ENCODE measurements at regions of chr3 and their contacts with region 1.

Region 1: DNA sequence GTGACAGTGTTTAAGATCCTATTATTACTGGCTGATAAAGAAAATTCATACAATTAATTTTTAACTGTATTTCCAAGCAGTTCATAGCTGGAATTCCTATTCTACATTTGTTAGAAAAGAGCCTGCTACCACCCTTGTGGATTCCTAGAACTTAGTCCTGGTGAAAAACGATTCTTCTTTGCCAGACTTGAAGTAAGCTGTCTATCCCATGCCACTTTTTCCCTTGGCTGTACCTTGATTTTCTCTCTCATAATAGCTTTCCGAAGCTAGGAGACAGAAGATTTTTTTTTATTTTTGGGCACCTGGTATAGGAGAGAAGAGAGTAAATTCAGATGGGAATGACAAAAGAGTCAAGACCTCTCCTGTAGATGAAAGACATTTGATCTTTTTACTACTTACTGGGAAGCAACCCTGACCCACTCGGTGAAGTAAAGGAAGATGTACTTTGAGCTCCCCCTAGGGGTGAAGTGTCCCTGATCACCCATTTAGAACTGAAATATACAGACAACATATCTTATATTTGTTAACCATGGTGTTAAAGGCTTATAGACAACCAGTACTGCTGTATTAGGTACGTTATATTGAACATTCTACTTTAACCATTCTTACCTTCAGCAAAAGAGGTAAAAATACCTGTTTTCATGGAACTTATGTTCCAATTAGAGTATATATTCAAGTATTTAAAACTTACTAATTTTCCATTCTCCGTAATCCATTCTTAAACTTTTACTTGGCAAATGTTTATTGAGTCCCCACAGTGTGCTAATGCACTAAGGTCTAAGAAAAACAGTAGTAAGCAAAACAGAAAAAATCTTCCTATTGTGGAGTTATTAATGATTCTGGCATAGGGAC is 36.2 kb upstream of the C3orf38 start:
- DNase-seq: peak in 13 of 14 experiments; percentile 4 to 84 (median 47)
- ATAC-seq: peak; percentile 96
- H3K4me3 ChIP-seq: no peak overlapping the region
- H3K4me3 Mint-ChIP-seq: no peak overlapping the region
- H3K27ac ChIP-seq: no peak overlapping the region
- H3K27ac Mint-ChIP-seq: peak overlapping the region; percentile 14
- H3K4me1 ChIP-seq: no peaks in the 10 kb centered on the region
- H3K4me1 Mint-ChIP-seq: peaks cover 30% of the 10 kb centered on the region
- H3K27me3 ChIP-seq: no peaks in the 10 kb centered on the region
- H3K27me3 Mint-ChIP-seq: no peaks in the 10 kb centered on the region
- CTCF ChIP-seq: peak; percentile 92

Region 2: GRCh38 chr3:86948840-86949239 is 1164.7 kb before region 1 on chr3:
- CTCF ChIA-PET with region 1: no interaction called
- POLR2A ChIA-PET with region 1: no interaction called
- intact Hi-C with region 1: no loop called
- DNase-seq: no peak
- ATAC-seq: no peak
- H3K4me3 ChIP-seq: no peak overlapping the region
- H3K4me3 Mint-ChIP-seq: no peak overlapping the region
- H3K27ac ChIP-seq: no peak overlapping the region
- H3K27ac Mint-ChIP-seq: no peak overlapping the region
- H3K4me1 ChIP-seq: no peaks in the 10 kb centered on the region
- H3K4me1 Mint-ChIP-seq: no peaks in the 10 kb centered on the region
- H3K27me3 ChIP-seq: no peaks in the 10 kb centered on the region
- H3K27me3 Mint-ChIP-seq: no peaks in the 10 kb centered on the region
- CTCF ChIP-seq: no peak

Region 3: DNA sequence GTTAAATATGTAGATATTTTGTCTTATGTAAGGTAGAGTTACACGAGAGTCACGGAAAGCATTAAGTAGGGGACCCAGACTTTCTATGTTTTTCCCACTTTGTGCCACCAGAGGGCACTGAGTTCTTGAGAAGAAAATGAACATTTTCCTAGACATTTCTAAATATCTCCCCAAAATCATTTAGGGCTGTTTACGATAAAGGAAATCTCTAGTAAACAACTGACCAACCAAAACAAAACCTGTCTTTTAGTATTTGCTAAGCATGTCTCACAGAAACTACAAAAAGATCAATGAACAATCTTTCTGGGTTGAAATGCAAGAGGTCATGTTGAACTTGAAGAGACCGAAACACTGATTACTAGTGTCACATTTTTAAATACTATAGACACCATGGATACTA is 853.3 kb before region 1 on chr3:
- CTCF ChIA-PET with region 1: interaction called, 9 read pairs
- POLR2A ChIA-PET with region 1: no interaction called
- intact Hi-C with region 1: loop called in 1 of 2 experiments (anchors 1 kb)
- DNase-seq: peak in 10 of 14 experiments; percentile 3 to 62 (median 26)
- ATAC-seq: peak; percentile 68
- H3K4me3 ChIP-seq: no peak overlapping the region
- H3K4me3 Mint-ChIP-seq: no peak overlapping the region
- H3K27ac ChIP-seq: no peak overlapping the region
- H3K27ac Mint-ChIP-seq: no peak overlapping the region
- H3K4me1 ChIP-seq: no peaks in the 10 kb centered on the region
- H3K4me1 Mint-ChIP-seq: peaks cover 5% of the 10 kb centered on the region
- H3K27me3 ChIP-seq: no peaks in the 10 kb centered on the region
- H3K27me3 Mint-ChIP-seq: no peaks in the 10 kb centered on the region
- CTCF ChIP-seq: peak; percentile 78

Region 4: GRCh38 chr3:87350364-87351199 is 763.0 kb before region 1 on chr3:
- CTCF ChIA-PET with region 1: interaction called, 10 read pairs
- POLR2A ChIA-PET with region 1: no interaction called
- intact Hi-C with region 1: loop called (anchors 1 to 2 kb)
- DNase-seq: peak in 5 of 14 experiments; percentile 2 to 70 (median 56)
- ATAC-seq: peak; percentile 89
- H3K4me3 ChIP-seq: no peak overlapping the region
- H3K4me3 Mint-ChIP-seq: no peak overlapping the region
- H3K27ac ChIP-seq: no peak overlapping the region
- H3K27ac Mint-ChIP-seq: no peak overlapping the region
- H3K4me1 ChIP-seq: no peaks in the 10 kb centered on the region
- H3K4me1 Mint-ChIP-seq: no peaks in the 10 kb centered on the region
- H3K27me3 ChIP-seq: no peaks in the 10 kb centered on the region
- H3K27me3 Mint-ChIP-seq: no peaks in the 10 kb centered on the region
- CTCF ChIP-seq: peak; percentile 94

Region 5: DNA sequence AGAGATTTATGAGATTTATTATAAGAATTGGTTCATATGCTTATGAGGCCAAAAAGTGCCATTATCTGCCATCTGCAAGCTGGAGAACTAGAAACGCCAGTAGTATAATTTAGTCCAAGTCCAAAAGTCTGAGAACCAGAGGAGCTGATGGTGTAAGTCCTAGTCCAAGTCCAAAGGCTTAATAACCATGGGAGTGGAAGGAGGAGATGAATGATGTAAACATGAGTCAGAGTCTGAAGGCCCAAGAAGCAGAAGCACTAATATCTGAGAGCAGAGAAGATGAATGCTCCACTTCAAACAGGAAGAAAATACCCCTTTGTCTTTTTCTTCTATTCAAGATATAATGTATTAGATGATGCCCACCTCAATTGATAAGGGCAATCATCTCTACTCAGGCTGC is 240.4 kb before region 1 on chr3:
- CTCF ChIA-PET with region 1: no interaction called
- POLR2A ChIA-PET with region 1: no interaction called
- intact Hi-C with region 1: loop called in 1 of 2 experiments (anchors 10 kb)
- DNase-seq: no peak
- ATAC-seq: no peak
- H3K4me3 ChIP-seq: no peak overlapping the region
- H3K4me3 Mint-ChIP-seq: no peak overlapping the region
- H3K27ac ChIP-seq: no peak overlapping the region
- H3K27ac Mint-ChIP-seq: no peak overlapping the region
- H3K4me1 ChIP-seq: no peaks in the 10 kb centered on the region
- H3K4me1 Mint-ChIP-seq: no peaks in the 10 kb centered on the region
- H3K27me3 ChIP-seq: no peaks in the 10 kb centered on the region
- H3K27me3 Mint-ChIP-seq: no peaks in the 10 kb centered on the region
- CTCF ChIP-seq: no peak

Region 6: DNA sequence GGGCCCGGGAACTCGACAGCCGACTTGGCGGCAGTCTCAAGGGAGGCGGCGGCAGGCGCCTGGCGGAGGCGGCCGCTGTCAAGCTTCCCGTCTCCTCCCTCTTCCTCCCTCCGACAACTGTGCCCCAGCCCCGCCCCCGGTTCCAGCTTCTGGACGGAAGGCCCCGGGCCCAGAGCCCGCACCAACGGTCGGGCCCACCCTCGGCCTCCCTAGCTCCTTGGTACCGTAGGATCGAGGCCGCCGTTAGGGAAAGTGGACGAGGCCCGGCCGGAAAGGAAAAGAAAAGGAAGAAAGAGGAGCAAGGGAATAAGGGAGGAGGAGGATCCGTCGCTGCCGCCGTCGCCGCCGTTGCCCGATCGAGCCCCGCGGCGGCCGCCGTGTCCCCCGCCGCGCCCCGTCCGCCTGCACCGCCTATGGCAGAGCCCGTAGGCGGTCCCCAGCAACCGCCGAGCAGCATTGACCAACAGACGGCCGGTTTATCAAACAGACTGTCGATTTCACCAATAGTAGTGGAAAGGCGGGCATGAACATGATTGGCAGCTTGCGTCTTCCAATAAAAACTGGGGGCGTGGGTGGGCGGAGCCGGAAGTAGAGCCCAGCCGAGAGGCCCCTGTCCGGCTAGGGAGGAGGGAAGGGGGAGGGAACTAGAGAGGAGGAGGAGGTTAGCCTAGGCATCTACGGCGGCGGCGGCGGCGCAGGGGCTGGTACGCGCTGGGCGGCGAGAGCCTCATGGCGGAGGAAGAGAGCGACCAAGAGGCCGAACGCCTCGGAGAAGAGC is 54.8 kb before region 1 on chr3 and contains the starts of genes CGGBP1 and ZNF654:
- CTCF ChIA-PET with region 1: interaction called, 3 read pairs
- POLR2A ChIA-PET with region 1: interaction called, 7 read pairs
- intact Hi-C with region 1: loop called in 1 of 2 experiments (anchors 5 kb)
- DNase-seq: peak; percentile 96 to 99 (median 99)
- ATAC-seq: peak; percentile 89
- H3K4me3 ChIP-seq: peak within 1 kb of the TSS; percentile 98
- H3K4me3 Mint-ChIP-seq: peak within 1 kb of the TSS; percentile 100
- H3K27ac ChIP-seq: peak within 1 kb of the TSS; percentile 92
- H3K27ac Mint-ChIP-seq: peak within 1 kb of the TSS; percentile 93
- H3K4me1 ChIP-seq: peaks cover 5% of the 10 kb centered on the region
- H3K4me1 Mint-ChIP-seq: peaks cover 72% of the 10 kb centered on the region
- H3K27me3 ChIP-seq: no peaks in the 10 kb centered on the region
- H3K27me3 Mint-ChIP-seq: no peaks in the 10 kb centered on the region
- CTCF ChIP-seq: no peak
- total RNA-seq, gene CGGBP1: 88.7 to 89.7 TPM
- total RNA-seq, gene ZNF654: 6.5 to 7.6 TPM

Region 7: GRCh38 chr3:88189361-88189810 is 75.8 kb after region 1 on chr3:
- CTCF ChIA-PET with region 1: no interaction called
- POLR2A ChIA-PET with region 1: no interaction called
- intact Hi-C with region 1: no loop called
- DNase-seq: no peak
- ATAC-seq: no peak
- H3K4me3 ChIP-seq: no peak overlapping the region
- H3K4me3 Mint-ChIP-seq: no peak overlapping the region
- H3K27ac ChIP-seq: no peak overlapping the region
- H3K27ac Mint-ChIP-seq: no peak overlapping the region
- H3K4me1 ChIP-seq: no peaks in the 10 kb centered on the region
- H3K4me1 Mint-ChIP-seq: no peaks in the 10 kb centered on the region
- H3K27me3 ChIP-seq: no peaks in the 10 kb centered on the region
- H3K27me3 Mint-ChIP-seq: no peaks in the 10 kb centered on the region
- CTCF ChIP-seq: no peak

Region 8: DNA sequence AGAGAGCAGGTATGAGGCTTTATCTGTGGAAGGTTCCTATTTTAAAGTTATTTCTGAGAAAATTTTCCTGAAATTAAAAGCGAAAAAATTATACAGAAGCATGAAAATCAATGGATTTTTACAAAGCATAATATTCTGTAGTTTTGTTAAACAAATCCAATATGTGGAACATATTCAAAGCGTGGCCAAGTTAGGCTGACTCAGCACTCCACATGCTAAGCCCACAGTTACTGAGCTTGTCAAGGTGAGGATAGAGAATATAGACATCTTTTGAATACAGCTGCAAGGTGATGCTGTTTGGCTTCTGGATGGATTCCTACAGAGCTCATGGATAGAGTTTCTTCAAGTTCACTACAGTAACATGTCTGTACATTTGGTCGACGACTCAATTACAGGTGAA is 338.7 kb after region 1 on chr3:
- CTCF ChIA-PET with region 1: no interaction called
- POLR2A ChIA-PET with region 1: no interaction called
- intact Hi-C with region 1: no loop called
- DNase-seq: no peak
- ATAC-seq: no peak
- H3K4me3 ChIP-seq: no peak overlapping the region
- H3K4me3 Mint-ChIP-seq: no peak overlapping the region
- H3K27ac ChIP-seq: no peak overlapping the region
- H3K27ac Mint-ChIP-seq: no peak overlapping the region
- H3K4me1 ChIP-seq: no peaks in the 10 kb centered on the region
- H3K4me1 Mint-ChIP-seq: no peaks in the 10 kb centered on the region
- H3K27me3 ChIP-seq: no peaks in the 10 kb centered on the region
- H3K27me3 Mint-ChIP-seq: no peaks in the 10 kb centered on the region
- CTCF ChIP-seq: no peak

Measured in CD4-positive, alpha-beta T cell (primary cell).